ENCODE measurements at regions of chr22 and their contacts with region 1.

Region 1: DNA sequence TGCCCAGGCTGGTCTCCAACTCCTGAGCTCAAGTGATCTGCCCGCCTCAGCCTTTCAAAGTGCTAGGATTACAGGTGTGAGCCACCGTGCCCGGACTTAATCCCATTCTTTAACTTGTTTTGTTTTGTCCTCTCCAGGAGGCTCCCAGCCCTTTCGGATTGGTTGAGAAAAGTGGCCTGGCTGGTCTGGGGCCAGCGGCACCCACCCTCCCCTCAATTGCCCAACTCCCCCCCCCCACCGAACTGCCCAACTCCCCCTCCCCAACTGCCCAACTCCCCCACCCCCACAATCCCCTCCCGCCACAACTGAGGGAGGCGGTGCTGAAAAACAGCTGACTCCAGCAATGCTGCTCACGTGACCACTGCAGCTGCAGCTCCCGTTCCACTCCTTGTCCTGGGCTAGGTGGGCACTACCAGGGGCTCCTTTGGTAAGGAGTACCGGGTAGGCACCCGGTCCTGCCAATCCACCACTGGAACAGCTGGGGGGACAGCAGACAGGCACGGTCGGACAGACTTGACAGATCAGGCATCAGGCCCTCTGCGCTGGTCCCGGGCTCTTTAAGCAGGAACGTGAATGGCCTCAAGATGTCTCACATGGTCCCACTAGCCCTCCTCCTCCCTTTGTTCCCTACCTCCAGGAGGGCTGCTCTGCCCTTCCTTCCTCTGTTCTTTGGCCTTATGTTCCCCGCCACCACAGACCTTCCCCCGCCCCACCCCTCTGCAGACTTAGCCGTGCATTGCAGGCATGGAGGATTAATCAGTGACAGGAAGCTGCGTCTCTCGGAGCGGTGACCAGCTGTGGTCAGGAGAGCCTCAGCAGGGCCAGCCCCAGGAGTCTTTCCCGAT is at the start of gene TCN2:
- DNase-seq: peak; percentile 49
- ATAC-seq: peak; percentile 55
- H3K4me3 ChIP-seq: peak within 1 kb of the TSS; percentile 73
- H3K27ac ChIP-seq: no peak within 1 kb of the TSS
- H3K4me1 ChIP-seq: peaks cover 34% of the 10 kb centered on the region
- H3K27me3 ChIP-seq: no peaks in the 10 kb centered on the region
- CTCF ChIP-seq: no peak
- total RNA-seq, gene TCN2: 1.7 and 4.2 TPM in 2 replicates

Region 2: DNA sequence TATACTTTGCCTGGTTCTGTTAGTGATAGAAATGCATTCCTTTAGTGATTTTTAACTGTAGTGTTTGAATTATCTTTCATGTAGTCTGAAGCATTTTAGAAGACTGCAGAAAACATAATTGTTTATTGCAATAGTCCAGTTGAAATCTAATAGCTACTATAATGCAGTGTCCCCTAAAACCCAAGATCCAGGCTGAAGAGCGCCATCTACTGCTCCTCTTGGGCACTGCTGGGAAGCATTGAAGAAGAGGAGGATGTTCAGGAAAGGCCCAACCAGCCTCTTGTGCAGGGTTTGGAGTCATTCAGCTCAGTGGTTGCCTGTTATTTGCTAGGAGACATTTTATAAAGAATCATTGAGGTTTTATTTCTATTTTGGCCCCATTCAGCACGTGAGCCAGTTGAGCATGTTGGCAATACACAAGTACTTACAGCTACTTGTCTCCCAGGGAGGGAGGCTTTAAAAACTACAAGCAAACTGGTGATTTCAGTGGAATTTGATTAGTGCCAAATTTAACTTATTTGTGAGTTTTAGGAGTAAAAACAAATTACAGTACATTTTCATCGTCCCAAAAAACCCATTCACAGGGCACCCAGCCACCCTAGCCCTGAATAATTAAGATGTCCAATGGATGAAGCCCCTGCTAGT is 601.3 kb before region 1 on chr22:
- CTCF ChIA-PET with region 1: no interaction called
- POLR2A ChIA-PET with region 1: no interaction called
- intact Hi-C with region 1: no loop called
- DNase-seq: peak; percentile 84
- ATAC-seq: peak; percentile 85
- H3K4me3 ChIP-seq: no peak overlapping the region
- H3K27ac ChIP-seq: no peak overlapping the region
- H3K4me1 ChIP-seq: no peaks in the 10 kb centered on the region
- H3K27me3 ChIP-seq: no peaks in the 10 kb centered on the region
- CTCF ChIP-seq: peak; percentile 93

Region 3: GRCh38 chr22:30426395-30427353 is 180.0 kb before region 1 on chr22:
- CTCF ChIA-PET with region 1: no interaction called
- POLR2A ChIA-PET with region 1: interaction called, 10 read pairs
- intact Hi-C with region 1: no loop called
- DNase-seq: peak; percentile 89
- ATAC-seq: peak; percentile 9
- H3K4me3 ChIP-seq: peak overlapping the region; percentile 71
- H3K27ac ChIP-seq: peak overlapping the region; percentile 95
- H3K4me1 ChIP-seq: peaks cover 38% of the 10 kb centered on the region
- H3K27me3 ChIP-seq: no peaks in the 10 kb centered on the region
- CTCF ChIP-seq: peak; percentile 70

Region 4: GRCh38 chr22:30444632-30445437 is 161.8 kb before region 1 on chr22:
- CTCF ChIA-PET with region 1: no interaction called
- POLR2A ChIA-PET with region 1: no interaction called
- intact Hi-C with region 1: loop called (anchors 10 kb)
- DNase-seq: peak; percentile 65
- ATAC-seq: peak; percentile 46; the same call in 1 of the 2 replicates
- H3K4me3 ChIP-seq: no peak overlapping the region
- H3K27ac ChIP-seq: no peak overlapping the region
- H3K4me1 ChIP-seq: peaks cover 5% of the 10 kb centered on the region
- H3K27me3 ChIP-seq: no peaks in the 10 kb centered on the region
- CTCF ChIP-seq: peak; percentile 75

Region 5: DNA sequence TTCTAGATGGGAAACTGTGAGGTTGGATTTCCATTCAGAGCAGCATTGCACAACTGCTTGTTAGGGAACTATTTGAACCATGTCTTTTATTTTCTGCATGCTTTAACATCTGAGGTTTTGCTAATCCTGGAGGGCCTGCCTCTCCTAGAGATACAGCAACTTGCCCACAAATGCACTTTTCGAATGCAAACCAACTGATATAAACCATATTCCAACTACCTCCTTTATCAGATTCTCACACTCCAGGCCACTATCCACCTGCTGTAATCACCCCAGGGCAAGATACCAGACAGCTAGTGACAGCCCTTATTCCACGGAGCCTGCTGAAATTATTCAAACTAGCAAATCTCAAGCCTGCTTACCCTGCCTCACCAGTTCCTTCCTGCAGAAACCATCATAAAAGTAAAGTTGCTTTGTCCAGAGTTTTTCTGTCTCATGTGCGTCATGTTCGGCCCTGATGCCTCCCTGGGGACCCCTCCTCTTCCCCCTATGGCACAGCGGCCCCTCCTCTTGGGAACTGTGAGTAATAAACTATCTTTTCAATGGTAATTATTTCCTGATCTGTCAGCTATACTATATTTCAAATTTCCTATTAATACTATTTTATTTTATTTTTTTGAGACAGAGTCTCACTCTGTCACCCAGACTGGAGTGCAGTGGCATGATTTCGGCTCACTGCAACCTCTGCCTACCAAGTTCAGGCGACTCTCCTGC is 82.7 kb before region 1 on chr22:
- CTCF ChIA-PET with region 1: no interaction called
- POLR2A ChIA-PET with region 1: no interaction called
- intact Hi-C with region 1: no loop called
- DNase-seq: no peak
- ATAC-seq: no peak
- H3K4me3 ChIP-seq: no peak overlapping the region
- H3K27ac ChIP-seq: no peak overlapping the region
- H3K4me1 ChIP-seq: no peaks in the 10 kb centered on the region
- H3K27me3 ChIP-seq: peaks cover 3% of the 10 kb centered on the region; the same call in 1 of the 2 replicates
- CTCF ChIP-seq: no peak

Region 6: DNA sequence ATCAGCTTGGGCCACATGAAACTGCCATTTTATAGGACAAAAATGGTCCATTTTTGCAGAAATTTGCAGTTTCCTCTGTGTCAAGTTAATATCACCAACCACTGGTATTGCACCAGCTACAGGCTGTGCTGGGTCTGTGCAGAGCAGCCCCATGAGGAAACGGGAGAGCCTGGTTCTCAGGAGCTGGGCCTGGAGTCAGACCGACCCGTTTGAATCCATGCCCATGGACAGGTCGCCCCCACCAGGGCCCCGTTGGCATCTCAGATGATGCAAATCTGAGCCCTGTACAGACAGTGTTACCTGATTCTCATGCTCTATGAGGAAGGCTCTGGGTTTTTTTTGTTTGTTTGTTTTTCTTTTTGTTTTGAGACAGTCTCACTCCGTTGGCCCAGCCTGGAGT is 50.3 kb before region 1 on chr22:
- CTCF ChIA-PET with region 1: no interaction called
- POLR2A ChIA-PET with region 1: no interaction called
- intact Hi-C with region 1: no loop called
- DNase-seq: peak; percentile 9
- ATAC-seq: peak; percentile 60
- H3K4me3 ChIP-seq: no peak overlapping the region
- H3K27ac ChIP-seq: no peak overlapping the region
- H3K4me1 ChIP-seq: no peaks in the 10 kb centered on the region
- H3K27me3 ChIP-seq: no peaks in the 10 kb centered on the region
- CTCF ChIP-seq: peak; percentile 35; the same call in 1 of the 2 replicates

Region 7: DNA sequence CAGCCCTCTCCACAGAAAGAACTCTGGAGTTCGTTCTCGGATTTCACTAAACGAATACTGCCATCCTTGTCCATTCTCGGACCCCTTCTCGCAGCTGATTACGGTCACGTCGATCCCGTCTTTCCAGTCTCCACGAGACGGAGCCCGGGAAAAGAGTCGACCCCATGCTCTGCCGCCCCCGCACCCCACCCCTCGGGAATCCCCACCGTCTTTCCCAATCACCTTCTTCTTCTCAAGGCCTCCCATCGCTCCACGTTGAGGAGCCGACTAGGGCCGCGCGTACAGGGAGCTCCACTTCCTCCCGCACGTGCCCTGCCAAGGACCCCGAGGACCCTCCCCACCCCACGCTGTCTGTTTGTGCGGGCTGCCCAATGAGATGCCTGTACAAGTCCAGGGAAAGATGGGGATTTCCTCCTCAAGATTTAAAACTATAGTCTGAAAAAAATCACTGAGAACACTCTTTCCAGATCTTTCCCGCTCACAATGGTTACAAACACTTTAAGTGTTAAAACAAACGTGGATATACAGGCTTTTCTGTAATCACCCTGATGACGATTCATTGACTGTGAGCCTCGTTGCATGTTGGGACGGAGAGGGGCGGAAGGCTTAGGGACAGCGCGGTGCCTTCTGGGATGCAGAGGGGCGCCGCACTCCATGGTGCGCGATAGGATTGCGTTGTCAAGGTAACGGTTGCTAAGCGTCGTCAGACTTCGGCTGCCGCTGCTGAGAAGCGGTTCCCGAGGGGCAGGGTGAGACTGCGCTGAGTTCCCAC is 14.9 kb before region 1 on chr22 and contains the start of gene PES1:
- CTCF ChIA-PET with region 1: interaction called, 4 read pairs
- POLR2A ChIA-PET with region 1: interaction called, 18 read pairs
- intact Hi-C with region 1: no loop called
- DNase-seq: peak; percentile 96
- ATAC-seq: peak; percentile 99
- H3K4me3 ChIP-seq: peak within 1 kb of the TSS; percentile 98
- H3K27ac ChIP-seq: peak within 1 kb of the TSS; percentile 60
- H3K4me1 ChIP-seq: peaks cover 8% of the 10 kb centered on the region; the same call in 1 of the 2 replicates
- H3K27me3 ChIP-seq: 0 out of 2 replicates have a peak, but pooled peaks cover 2% of the 10 kb centered on the region
- CTCF ChIP-seq: no peak
- total RNA-seq, gene PES1: 105 and 154 TPM in 2 replicates

Region 8: DNA sequence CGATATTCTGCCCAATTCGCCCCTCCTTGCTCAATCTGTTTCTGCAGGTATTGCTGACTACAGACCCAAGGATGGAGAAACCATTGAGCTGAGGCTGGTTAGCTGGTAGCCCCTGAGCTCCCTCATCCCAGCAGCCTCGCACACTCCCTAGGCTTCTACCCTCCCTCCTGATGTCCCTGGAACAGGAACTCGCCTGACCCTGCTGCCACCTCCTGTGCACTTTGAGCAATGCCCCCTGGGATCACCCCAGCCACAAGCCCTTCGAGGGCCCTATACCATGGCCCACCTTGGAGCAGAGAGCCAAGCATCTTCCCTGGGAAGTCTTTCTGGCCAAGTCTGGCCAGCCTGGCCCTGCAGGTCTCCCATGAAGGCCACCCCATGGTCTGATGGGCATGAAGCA is 19.7 kb after region 1 on chr22:
- CTCF ChIA-PET with region 1: no interaction called
- POLR2A ChIA-PET with region 1: no interaction called
- intact Hi-C with region 1: no loop called
- DNase-seq: no peak
- ATAC-seq: no peak
- H3K4me3 ChIP-seq: no peak overlapping the region
- H3K27ac ChIP-seq: no peak overlapping the region
- H3K4me1 ChIP-seq: no peaks in the 10 kb centered on the region
- H3K27me3 ChIP-seq: no peaks in the 10 kb centered on the region
- CTCF ChIP-seq: no peak

Measured in PC-3 (cell line).